ENCODE measurements at regions of chr1 and their contacts with region 1.

Region 1: GRCh38 chr1:34029515-34030300 is 135.3 kb downstream of the CSMD2 start:
- DNase-seq: no peak
- ATAC-seq: no peak

Region 2: DNA sequence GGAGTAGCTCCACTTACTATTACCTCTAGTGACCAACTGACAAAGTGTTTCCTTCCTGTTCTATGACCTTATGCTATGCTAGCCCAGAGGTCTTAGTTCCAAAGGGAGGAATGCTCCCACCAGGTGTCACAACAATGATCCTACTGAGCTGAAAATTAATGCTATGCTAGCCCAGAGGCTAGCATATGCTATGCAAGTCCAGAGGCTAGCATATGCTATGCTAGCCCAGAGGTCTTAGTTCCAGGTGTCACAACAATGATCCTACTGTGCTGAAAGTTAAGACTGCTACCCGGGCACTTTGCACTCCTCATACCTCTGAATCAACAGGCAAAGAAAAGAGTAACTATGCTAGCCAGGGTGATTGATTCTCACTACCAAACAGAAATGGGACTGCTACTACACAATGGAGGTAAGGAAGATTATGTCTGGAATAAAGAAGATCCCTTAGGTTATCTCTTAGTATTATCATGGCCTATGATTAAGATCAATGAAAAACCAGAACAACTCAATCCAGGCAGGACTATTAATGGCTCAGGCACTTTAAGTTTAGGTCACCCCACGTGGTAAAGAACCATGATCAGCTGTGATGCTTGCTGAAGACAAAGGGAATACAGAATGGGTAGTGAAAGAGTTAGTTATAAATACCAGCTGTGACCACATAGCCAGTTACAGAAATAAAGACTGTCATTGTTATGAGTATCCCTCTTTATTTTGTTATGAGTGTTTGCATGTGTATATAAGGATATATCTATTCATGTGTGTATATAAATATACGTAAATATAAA is 21.2 kb after region 1 on chr1:
- intact Hi-C with region 1: loop called in 1 of 2 experiments (anchors 1 kb)
- DNase-seq: no peak
- ATAC-seq: no peak

Measured in left cardiac atrium (tissue), 4 donors.